ENCODE measurements at regions of chr1 and their contacts with region 1.

Region 1: GRCh38 chr1:37486680-37487618 is 12.6 kb downstream of the ZC3H12A start:
- DNase-seq: peak; percentile 90

Region 2: DNA sequence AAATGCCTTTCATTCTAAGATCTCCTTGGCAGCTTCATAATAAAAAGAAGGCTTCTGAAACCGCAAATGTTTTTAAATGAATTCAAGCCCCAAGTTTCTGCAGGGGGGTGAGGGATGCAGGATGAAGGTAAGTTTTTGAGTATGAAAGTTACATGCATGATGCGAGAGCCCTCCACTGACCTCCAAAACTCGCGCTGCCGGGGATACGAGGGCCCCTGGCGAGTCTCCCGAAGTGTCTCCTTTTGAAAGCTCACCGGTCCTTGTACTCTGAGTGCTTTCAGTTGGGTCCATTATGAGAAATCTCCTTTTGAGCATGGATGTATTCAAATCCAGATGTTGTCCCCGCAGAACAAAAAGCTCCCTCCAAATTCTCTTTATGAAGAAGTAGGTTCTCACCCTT is 31.4 kb before region 1 on chr1:
- intact Hi-C with region 1: loop called (anchors 1 kb)
- DNase-seq: no peak

Region 3: GRCh38 chr1:37537378-37537777 is 50.4 kb after region 1 on chr1:
- intact Hi-C with region 1: no loop called
- DNase-seq: no peak

Region 4: DNA sequence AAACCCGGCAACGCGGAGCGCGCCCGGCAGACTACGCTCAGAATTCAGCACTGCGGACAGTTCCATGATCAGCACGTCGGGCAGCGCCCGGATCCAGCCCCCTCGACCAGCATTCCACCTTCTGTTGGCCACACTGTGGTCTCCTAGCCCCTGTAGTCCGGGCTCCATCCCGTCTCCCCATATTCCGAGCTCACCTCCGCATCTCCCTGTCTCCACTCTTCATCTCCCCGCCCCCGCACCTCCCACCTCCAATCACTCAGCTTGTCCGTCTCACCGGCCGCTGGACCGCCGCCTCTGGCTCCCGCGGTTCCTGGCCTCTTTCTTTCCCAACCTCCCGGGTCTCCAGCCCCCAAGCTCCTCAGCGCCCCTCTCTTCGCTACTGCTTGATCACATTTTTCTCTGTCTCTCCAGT is 277.5 kb after region 1 on chr1:
- intact Hi-C with region 1: no loop called
- DNase-seq: no peak

Region 5: GRCh38 chr1:37807555-37808368 is 320.8 kb after region 1 on chr1 and contains the starts of genes C1orf122 and YRDC:
- intact Hi-C with region 1: no loop called
- DNase-seq: peak; percentile 98
- total RNA-seq, gene C1orf122: 52.1 TPM
- total RNA-seq, gene YRDC: 6.3 TPM

Measured in cardiac septum (tissue), 1 donor.